AG04450 (cell line): ENCODE measurements at regions of chr6 and their contacts with region 1.

Region 1: DNA sequence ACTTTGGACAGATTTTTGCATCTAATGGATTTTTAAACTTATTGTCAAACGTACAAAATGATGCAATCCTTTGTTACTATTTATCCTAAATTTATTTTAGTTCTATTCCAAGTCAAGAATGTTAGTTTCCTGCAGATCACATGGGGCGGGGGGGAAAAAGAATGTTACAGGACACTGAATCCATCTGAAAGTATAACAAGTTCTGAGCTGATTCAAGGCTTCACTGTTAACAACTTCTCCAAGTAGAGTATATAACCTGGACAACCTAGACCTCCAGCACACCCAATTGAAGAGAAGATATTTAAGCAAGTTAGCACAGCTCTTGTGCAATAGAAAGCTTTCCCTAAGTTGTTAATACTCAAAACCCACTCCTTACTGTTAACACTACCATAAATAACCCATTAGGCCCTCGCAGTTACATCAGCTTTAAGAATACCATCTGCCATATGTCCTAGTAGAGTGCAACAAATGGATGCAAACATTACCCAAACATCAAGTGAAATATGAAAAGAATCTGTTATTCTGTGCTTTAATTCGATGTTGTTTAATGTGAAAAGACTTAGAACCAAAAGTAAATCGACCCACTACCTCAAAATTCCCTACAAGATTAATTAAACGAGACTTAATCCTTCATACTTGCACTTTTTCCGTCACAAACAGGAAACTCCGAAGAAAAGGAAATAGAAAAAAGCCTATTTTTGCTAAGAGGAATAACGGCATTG is 1.3 kb downstream of the SEC63 start:
- DNase-seq: peak; percentile 8
- H3K4me3 ChIP-seq: peak overlapping the region; percentile 97
- H3K27ac ChIP-seq: peak overlapping the region; percentile 94
- H3K27me3 ChIP-seq: no peaks in the 10 kb centered on the region
- CTCF ChIP-seq: no peak

Region 2: GRCh38 chr6:107585815-107586435 is 370.8 kb before region 1 on chr6:
- CTCF ChIA-PET with region 1: no interaction called
- POLR2A ChIA-PET with region 1: no interaction called
- DNase-seq: no peak
- H3K4me3 ChIP-seq: no peak overlapping the region
- H3K27ac ChIP-seq: no peak overlapping the region
- H3K27me3 ChIP-seq: no peaks in the 10 kb centered on the region
- CTCF ChIP-seq: no peak

Region 3: GRCh38 chr6:108027594-108027993 is 70.8 kb after region 1 on chr6:
- CTCF ChIA-PET with region 1: no interaction called
- POLR2A ChIA-PET with region 1: interaction called, 10 read pairs
- DNase-seq: no peak
- H3K4me3 ChIP-seq: no peak overlapping the region
- H3K27ac ChIP-seq: no peak overlapping the region
- H3K27me3 ChIP-seq: no peaks in the 10 kb centered on the region
- CTCF ChIP-seq: no peak